ENCODE measurements at regions of chr5 and their contacts with region 1.

Region 1: DNA sequence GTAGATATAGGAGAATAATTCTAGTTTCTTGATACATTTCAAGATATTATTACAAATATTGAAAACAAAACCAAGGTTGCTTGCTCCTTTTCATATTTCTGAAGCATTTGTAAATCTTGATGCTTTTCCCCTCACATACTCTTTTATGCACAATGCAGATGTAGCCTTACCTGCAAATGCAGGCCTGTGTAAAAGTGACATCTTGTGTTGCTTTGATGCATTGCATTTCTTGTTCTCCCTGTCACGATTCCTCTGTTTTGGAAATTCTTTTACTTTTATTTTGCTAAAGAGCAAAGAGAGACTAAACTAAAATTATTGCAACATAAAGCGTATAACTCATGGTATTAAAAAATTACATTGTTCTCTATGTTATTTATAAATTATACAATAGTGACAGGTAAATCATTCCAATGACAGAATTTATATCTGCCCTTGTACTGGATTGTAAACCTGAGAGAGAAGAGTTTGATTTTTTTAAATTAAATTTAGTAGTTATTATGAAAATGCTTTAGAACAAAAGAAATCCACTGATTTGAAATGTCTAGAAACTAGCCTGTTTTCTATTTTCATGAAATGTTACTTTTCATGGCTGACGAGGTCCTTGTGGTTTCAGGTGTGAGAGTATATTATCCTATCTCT is 970.0 kb downstream of the MAT2B start:
- DNase-seq: no peak
- H3K4me3 ChIP-seq: no peak overlapping the region
- H3K27ac ChIP-seq: no peak overlapping the region
- H3K4me1 ChIP-seq: no peaks in the 10 kb centered on the region
- H3K27me3 ChIP-seq: no peaks in the 10 kb centered on the region
- CTCF ChIP-seq: peak in 2 of 3 experiments; percentile 38 to 48

Region 2: DNA sequence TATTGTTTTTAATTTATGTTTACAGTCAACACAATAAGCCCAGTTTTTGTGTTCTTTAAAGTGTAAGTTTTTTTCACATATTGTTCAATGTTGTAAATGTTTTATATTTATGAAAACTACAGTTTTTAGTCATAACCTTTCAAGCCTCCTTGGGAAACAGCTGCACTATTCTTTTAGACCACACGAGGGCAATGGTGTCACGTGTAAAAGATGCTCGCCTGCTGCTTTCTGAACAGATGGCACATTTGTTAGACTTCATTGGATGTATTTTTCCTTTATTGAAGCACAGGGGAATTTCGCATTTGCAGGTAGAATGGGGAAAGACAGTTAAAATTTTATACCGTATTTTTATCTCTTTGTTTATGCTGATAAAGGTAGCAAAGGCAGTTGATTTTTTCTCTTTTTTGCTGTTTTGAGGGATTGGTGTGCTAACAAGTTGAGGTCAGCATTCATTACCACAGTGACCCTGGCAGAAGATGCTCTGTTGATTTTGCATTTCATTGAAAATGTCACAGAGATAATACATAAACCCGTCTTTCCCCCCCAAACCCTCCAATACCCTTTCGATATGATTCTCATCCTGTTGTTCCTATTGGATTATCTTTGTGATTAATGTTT is 911.0 kb before region 1 on chr5:
- dilution Hi-C with region 1: loop called (anchors 25 kb)
- DNase-seq: peak; percentile 21
- H3K4me3 ChIP-seq: no peak overlapping the region
- H3K27ac ChIP-seq: no peak overlapping the region
- H3K4me1 ChIP-seq: peaks cover 3% of the 10 kb centered on the region
- H3K27me3 ChIP-seq: peaks cover 28% of the 10 kb centered on the region
- CTCF ChIP-seq: peak; percentile 69 to 80 (median 80)

Region 3: GRCh38 chr5:164013077-164013670 is 462.3 kb before region 1 on chr5:
- dilution Hi-C with region 1: loop called (anchors 25 kb)
- DNase-seq: no peak
- H3K4me3 ChIP-seq: no peak overlapping the region
- H3K27ac ChIP-seq: no peak overlapping the region
- H3K4me1 ChIP-seq: no peaks in the 10 kb centered on the region
- H3K27me3 ChIP-seq: no peaks in the 10 kb centered on the region
- CTCF ChIP-seq: peak in 2 of 3 experiments; percentile 55 to 62

Region 4: GRCh38 chr5:164412531-164412930 is 62.9 kb before region 1 on chr5:
- dilution Hi-C with region 1: no loop called
- DNase-seq: no peak
- H3K4me3 ChIP-seq: no peak overlapping the region
- H3K27ac ChIP-seq: no peak overlapping the region
- H3K4me1 ChIP-seq: no peaks in the 10 kb centered on the region
- H3K27me3 ChIP-seq: no peaks in the 10 kb centered on the region
- CTCF ChIP-seq: no peak

Measured in keratinocyte (primary cell).